Common myeloid progenitor, CD34-positive (primary cell): ENCODE measurements at regions of chr2 and their contacts with region 1.

Region 1: DNA sequence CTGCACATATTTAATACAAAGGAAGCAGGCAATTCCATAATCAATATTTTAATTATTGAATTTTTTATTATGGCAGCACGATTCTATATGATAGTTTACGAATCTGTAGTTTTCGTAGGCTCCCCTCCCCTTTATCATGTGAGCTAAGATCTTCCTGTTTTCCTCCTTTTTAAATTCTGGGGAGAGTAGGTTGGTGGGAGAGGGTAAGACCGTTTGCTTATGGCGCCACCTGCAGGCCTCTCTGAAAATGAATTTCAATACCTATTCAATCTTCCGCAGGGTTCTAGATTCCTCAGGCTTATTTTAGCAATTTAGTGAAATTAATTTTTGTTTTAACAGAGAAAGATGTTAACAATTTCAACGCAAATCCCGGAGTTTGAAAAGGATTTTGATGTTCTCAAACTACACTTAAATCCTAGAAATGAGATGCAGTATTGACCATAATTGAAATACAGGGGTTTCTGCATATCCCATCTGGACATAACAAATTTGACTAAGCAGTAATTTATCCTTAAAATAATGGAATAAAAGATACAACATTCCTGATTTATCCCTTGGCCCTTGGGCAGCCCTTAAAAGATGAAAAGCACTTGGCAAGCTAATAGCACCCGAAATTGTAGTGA is 12.8 kb upstream of the GBX2 start:
- DNase-seq: peak; percentile 54 to 71 (median 54)
- H3K4me3 ChIP-seq: no peak overlapping the region
- H3K27ac ChIP-seq: no peak overlapping the region
- H3K4me1 ChIP-seq: peaks cover 0 to 9% (median 5%) of the 10 kb centered on the region in 4 experiments
- H3K27me3 ChIP-seq: peaks cover 10 to 76% (median 26%) of the 10 kb centered on the region in 5 experiments

Region 2: DNA sequence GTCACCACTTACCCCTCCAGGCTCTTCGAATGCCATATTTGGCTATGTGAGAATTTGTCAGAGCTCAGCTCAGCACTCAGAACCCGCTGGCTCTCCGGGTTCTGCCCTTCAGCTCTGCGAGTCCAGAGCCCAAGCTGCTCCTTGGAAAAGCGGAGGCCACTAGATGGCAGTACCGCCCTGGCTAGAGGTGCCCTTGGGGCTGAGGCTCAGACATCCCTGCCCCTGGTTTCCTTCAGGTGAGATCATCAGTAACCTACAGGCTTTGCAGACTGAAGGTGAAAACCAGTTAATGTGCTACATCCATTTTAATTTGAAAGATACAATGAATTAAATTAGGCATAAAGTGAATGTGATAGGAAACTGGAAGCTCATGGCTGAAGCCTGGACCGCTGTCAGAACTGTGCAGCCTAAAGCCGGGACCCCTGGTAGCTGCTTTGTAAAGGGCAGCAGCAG is 401.5 kb before region 1 on chr2:
- CTCF ChIA-PET with region 1: interaction called, 18 read pairs
- POLR2A ChIA-PET with region 1: no interaction called
- DNase-seq: peak; percentile 44 to 64 (median 55)
- H3K4me3 ChIP-seq: no peak overlapping the region
- H3K27ac ChIP-seq: no peak overlapping the region
- H3K4me1 ChIP-seq: no peaks in the 10 kb centered on the region
- H3K27me3 ChIP-seq: peaks cover 0 to 24% (median 7%) of the 10 kb centered on the region in 5 experiments

Region 3: GRCh38 chr2:236167297-236168109 is 13.4 kb before region 1 on chr2:
- CTCF ChIA-PET with region 1: interaction called, 13 read pairs
- POLR2A ChIA-PET with region 1: interaction called, 3 read pairs
- DNase-seq: peak in 2 of 3 donors; percentile 38 to 45
- H3K4me3 ChIP-seq: peak overlapping the region in 2 of 7 experiments; percentile 38 to 50
- H3K27ac ChIP-seq: no peak overlapping the region
- H3K4me1 ChIP-seq: peaks cover 0 to 44% (median 20%) of the 10 kb centered on the region in 4 experiments
- H3K27me3 ChIP-seq: peaks cover 19 to 100% (median 47%) of the 10 kb centered on the region in 5 experiments

Region 4: GRCh38 chr2:236369661-236370062 is 188.7 kb after region 1 on chr2:
- CTCF ChIA-PET with region 1: no interaction called
- POLR2A ChIA-PET with region 1: no interaction called
- DNase-seq: no peak
- H3K4me3 ChIP-seq: no peak overlapping the region
- H3K27ac ChIP-seq: no peak overlapping the region
- H3K4me1 ChIP-seq: peaks cover 0 to 13% (median 12%) of the 10 kb centered on the region in 4 experiments
- H3K27me3 ChIP-seq: peaks cover 4 to 64% (median 25%) of the 10 kb centered on the region in 5 experiments

Region 5: DNA sequence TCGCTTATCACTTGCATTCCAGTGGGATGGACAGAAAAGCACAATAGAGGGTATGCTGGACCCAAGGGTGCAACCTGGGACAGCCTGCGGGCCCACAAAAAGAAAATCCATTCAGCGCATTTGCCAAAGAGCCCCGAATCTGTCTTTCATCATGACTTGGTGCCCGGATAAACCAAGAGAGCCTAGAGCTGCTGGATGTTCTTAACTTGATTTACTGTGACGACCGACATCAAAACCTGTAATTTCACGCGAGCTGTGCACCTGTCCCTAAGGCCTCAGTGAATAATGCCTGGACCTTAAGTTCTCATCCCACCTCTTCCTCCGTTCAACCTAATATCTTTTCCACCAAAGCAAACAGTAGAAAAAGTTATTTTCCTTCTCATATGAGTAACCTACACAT is 273.1 kb after region 1 on chr2:
- CTCF ChIA-PET with region 1: no interaction called
- POLR2A ChIA-PET with region 1: no interaction called
- DNase-seq: no peak
- H3K4me3 ChIP-seq: no peak overlapping the region
- H3K27ac ChIP-seq: no peak overlapping the region
- H3K4me1 ChIP-seq: no peaks in the 10 kb centered on the region
- H3K27me3 ChIP-seq: peaks cover 0 to 2% (median 0%) of the 10 kb centered on the region in 5 experiments